Right ventricle myocardium inferior (tissue), 1 donor: ENCODE measurements at regions of chr10 and their contacts with region 1.

Region 1: DNA sequence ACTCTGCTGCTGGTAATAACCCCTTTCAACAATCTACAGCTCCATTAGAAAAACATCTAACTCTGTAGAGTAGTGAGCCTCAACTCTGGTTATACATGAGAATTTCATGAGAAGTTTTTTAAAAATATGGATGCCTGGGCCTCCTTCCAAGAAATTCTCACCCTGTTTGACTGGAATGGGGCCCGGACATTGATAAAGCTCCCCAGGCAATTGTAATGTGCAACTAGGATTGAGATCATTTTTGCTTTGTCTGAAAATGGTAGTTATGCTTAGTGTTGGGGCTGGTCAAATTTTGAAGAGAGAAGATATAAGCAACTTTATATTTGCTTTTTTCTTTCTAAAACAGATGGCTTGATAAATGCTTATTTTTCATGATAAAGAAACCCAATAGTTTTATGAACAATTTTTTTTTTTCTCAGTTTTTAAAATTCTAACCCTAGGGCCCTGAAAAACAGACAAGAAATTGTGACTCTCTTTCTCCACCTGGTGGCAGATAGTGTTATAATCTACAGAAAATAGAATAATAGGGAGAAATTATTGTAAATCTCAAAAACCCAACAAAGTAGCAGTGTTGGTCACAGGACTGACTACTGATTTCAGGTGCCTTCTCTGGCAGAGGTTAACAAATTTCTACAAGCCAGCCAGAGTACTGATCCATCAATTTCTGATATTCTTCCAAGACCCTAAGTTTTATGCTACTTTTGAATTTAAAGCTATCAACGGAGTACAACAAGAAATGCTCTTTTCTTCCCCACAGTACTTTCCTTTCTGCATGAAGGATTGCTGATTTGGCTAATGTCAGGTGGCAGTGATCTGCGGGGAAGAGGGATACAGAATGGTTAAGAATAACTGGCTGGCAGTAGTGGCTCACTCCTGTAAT is 174.8 kb downstream of the DKK1 start:
- DNase-seq: no peak
- ATAC-seq: no peak

Region 2: GRCh38 chr10:52308251-52309031 is 180.4 kb before region 1 on chr10:
- intact Hi-C with region 1: loop called (anchors 1 kb)
- DNase-seq: peak; percentile 70
- ATAC-seq: peak; percentile 85

Region 3: DNA sequence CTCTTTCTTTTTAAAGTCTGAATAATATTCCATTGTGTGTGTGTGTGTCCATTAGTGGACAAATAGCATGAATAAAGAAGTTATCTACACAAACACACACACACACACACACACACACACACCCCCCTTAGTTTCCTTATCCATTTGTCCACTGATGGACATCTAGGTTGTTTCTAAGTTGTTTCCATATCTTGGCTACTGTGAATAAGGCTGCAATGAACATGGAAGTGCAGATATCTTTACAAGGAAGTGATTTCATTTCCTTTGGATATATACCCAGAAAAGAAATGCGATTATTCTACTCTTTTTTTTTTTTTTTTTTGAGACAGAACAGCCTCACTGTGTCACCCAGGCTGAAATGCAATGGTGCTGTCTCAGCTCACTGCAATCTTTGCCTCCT is 170.2 kb after region 1 on chr10:
- intact Hi-C with region 1: no loop called
- DNase-seq: no peak
- ATAC-seq: no peak